ENCODE measurements at regions of chr4 and their contacts with region 1.

Region 1: DNA sequence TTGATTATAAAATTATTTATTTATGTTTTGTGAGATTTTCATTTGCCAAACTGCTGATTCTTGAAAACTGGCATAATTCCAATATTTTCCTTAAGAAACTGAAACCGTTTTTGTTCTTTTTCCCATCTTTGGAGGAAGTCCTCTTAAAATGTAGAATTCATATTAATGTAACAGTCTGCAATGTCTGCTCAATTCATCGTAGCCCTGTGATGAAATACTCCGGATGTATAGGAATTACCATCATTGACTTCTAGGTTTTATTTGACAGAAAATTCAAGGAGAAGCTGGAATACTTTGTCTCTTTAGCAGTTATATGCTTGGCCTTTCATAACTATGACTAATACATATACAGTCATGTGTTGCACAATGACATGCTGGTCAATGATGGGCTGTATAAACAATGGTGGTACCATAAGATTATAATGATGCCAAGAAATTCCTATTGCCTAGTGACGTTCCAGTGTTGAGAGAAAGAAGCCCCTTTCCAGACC is 185.0 kb upstream of the GPRIN3 start:
- DNase-seq: peak; percentile 94
- H3K4me3 ChIP-seq: peak overlapping the region in 1 of 3 experiments; percentile 63
- H3K27ac ChIP-seq: peak overlapping the region; percentile 90
- H3K4me1 ChIP-seq: peaks cover 53% of the 10 kb centered on the region
- H3K27me3 ChIP-seq: no peaks in the 10 kb centered on the region
- CTCF ChIP-seq: no peak
- POLR2A ChIP-seq: no peak

Region 2: GRCh38 chr4:89410687-89411086 is 81.9 kb before region 1 on chr4:
- CTCF ChIA-PET with region 1: no interaction called
- POLR2A ChIA-PET with region 1: no interaction called
- dilution Hi-C with region 1: no loop called
- intact Hi-C with region 1: no loop called
- DNase-seq: no peak
- H3K4me3 ChIP-seq: no peak overlapping the region
- H3K27ac ChIP-seq: no peak overlapping the region
- H3K4me1 ChIP-seq: no peaks in the 10 kb centered on the region
- H3K27me3 ChIP-seq: peaks cover 0 to 2% of the 10 kb centered on the region in 2 experiments
- CTCF ChIP-seq: no peak
- POLR2A ChIP-seq: no peak

Region 3: GRCh38 chr4:89539374-89539773 is 46.7 kb after region 1 on chr4:
- CTCF ChIA-PET with region 1: interaction called, 7 read pairs
- POLR2A ChIA-PET with region 1: interaction called, 3 read pairs
- dilution Hi-C with region 1: no loop called
- intact Hi-C with region 1: loop called (anchors 1 kb)
- DNase-seq: peak; percentile 90
- H3K4me3 ChIP-seq: no peak overlapping the region
- H3K27ac ChIP-seq: peak overlapping the region; percentile 94
- H3K4me1 ChIP-seq: peaks cover 61% of the 10 kb centered on the region
- H3K27me3 ChIP-seq: no peaks in the 10 kb centered on the region
- CTCF ChIP-seq: no peak
- POLR2A ChIP-seq: no peak

Region 4: GRCh38 chr4:89549907-89550306 is 57.3 kb after region 1 on chr4:
- CTCF ChIA-PET with region 1: interaction called, 37 read pairs
- POLR2A ChIA-PET with region 1: interaction called, 3 read pairs
- dilution Hi-C with region 1: no loop called
- intact Hi-C with region 1: loop called (anchors 1 kb)
- DNase-seq: peak; percentile 97
- H3K4me3 ChIP-seq: no peak overlapping the region
- H3K27ac ChIP-seq: peak overlapping the region; percentile 81
- H3K4me1 ChIP-seq: peaks cover 23% of the 10 kb centered on the region
- H3K27me3 ChIP-seq: no peaks in the 10 kb centered on the region
- CTCF ChIP-seq: no peak
- POLR2A ChIP-seq: no peak

Region 5: DNA sequence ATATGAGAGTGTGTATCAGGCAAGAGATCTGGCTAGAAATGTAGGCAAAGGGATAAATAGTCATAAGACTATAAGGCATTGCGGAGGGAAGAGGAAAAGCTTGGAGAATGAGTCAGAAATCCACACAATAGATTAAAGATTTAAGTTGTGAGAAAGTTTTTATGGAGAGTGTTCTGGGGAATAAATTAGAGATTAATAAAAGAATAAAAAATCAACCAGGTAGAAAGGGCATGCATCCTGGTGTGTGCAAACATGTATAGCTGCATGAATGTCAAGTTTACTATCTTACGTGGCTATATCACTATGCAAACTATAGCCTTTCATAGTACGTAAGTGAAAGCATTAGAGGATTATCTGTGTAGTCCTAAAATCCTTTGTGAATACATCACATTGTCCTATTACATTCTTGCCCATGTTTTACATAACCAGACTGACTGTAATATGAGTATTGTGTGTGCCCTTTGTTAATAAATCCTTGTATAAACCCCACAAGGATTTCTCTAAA is 307.4 kb after region 1 on chr4:
- CTCF ChIA-PET with region 1: no interaction called
- POLR2A ChIA-PET with region 1: no interaction called
- dilution Hi-C with region 1: no loop called
- intact Hi-C with region 1: loop called (anchors 2 kb)
- DNase-seq: peak; percentile 91
- H3K4me3 ChIP-seq: peak overlapping the region in 1 of 3 experiments; percentile 45
- H3K27ac ChIP-seq: peak overlapping the region; percentile 90
- H3K4me1 ChIP-seq: peaks cover 53% of the 10 kb centered on the region
- H3K27me3 ChIP-seq: no peaks in the 10 kb centered on the region
- CTCF ChIP-seq: no peak
- POLR2A ChIP-seq: peak; percentile 77